OCI-LY7 (cell line): ENCODE measurements at regions of chr12 and their contacts with region 1.

Region 1: GRCh38 chr12:43882578-43883178 is 46.8 kb downstream of the TMEM117 start:
- DNase-seq: peak; percentile 56
- H3K4me3 ChIP-seq: no peak overlapping the region
- H3K27ac ChIP-seq: no peak overlapping the region
- H3K4me1 ChIP-seq: no peaks in the 10 kb centered on the region
- CTCF ChIP-seq: peak; percentile 93

Region 2: GRCh38 chr12:43444940-43445564 is 437.6 kb before region 1 on chr12:
- CTCF ChIA-PET with region 1: no interaction called
- POLR2A ChIA-PET with region 1: no interaction called
- intact Hi-C with region 1: loop called (anchors 5 kb)
- DNase-seq: peak; percentile 57
- H3K4me3 ChIP-seq: no peak overlapping the region
- H3K27ac ChIP-seq: no peak overlapping the region
- H3K4me1 ChIP-seq: no peaks in the 10 kb centered on the region
- CTCF ChIP-seq: peak; percentile 91

Region 3: GRCh38 chr12:43501703-43502102 is 381.0 kb before region 1 on chr12:
- CTCF ChIA-PET with region 1: no interaction called
- POLR2A ChIA-PET with region 1: no interaction called
- intact Hi-C with region 1: loop called (anchors 10 kb)
- DNase-seq: peak; percentile 10
- H3K4me3 ChIP-seq: no peak overlapping the region
- H3K27ac ChIP-seq: no peak overlapping the region
- H3K4me1 ChIP-seq: no peaks in the 10 kb centered on the region
- CTCF ChIP-seq: peak; percentile 74

Region 4: GRCh38 chr12:43758728-43759563 is 123.7 kb before region 1 on chr12 and contains the starts of genes IRAK4 and PUS7L:
- CTCF ChIA-PET with region 1: no interaction called
- POLR2A ChIA-PET with region 1: interaction called, 5 read pairs
- intact Hi-C with region 1: loop called (anchors 1 kb)
- DNase-seq: peak; percentile 99
- H3K4me3 ChIP-seq: peak within 1 kb of the TSS; percentile 76
- H3K27ac ChIP-seq: peak within 1 kb of the TSS; percentile 88
- H3K4me1 ChIP-seq: peaks cover 40% of the 10 kb centered on the region
- CTCF ChIP-seq: peak; percentile 43
- total RNA-seq, gene IRAK4: 17.3 and 17.9 TPM in 2 replicates
- total RNA-seq, gene PUS7L: 20.5 and 21.1 TPM in 2 replicates

Region 5: GRCh38 chr12:43776498-43776897 is 106.2 kb before region 1 on chr12:
- CTCF ChIA-PET with region 1: interaction called, 3 read pairs
- POLR2A ChIA-PET with region 1: interaction called, 4 read pairs
- intact Hi-C with region 1: loop called (anchors 1 kb)
- DNase-seq: peak; percentile 43
- H3K4me3 ChIP-seq: no peak overlapping the region
- H3K27ac ChIP-seq: no peak overlapping the region
- H3K4me1 ChIP-seq: no peaks in the 10 kb centered on the region
- CTCF ChIP-seq: peak; percentile 80